Naive thymus-derived CD4-positive, alpha-beta T cell (primary cell): ENCODE measurements at regions of chr16 and their contacts with region 1.

Region 1: DNA sequence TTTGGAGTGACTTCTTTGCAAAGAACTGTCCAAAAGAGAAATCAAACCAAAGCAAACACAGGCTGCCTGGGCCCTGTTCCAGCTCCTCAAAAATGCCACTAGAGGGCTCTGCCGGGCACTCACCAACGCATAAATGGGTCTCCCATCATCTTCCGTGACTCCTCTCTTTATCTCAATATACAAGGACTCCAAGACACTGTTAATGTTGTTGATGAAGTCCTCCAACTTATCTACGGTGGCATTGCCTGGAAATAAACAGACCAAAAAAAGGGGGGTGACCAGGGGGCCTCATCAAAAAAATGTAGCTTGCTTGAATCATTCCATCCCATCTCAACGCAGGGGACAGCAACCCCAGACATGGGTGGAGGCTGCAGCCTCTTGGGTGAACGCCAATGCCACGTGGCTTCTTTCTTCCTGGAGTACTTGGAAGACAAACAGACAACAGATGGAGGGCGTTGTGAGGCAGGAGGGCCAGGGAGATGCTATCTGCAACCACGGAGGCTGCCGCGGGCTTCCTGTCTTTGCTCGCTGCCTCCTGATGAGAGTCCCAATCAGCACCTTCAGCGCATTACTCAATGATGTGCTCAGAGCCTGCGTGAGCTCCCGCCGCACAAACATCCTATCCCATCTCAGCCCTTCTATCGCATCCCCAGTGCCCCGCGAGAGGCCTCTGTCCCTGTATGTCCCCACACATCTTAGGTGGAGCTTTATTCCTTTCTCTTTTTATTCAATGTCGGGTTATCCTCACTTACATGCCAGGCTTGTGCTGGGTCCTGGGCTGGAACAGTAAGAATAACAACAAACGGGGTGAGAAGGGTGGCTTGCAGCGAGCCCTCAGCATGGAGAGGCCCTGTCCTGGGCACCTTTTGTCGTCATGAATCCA is 32.0 kb downstream of the KDM8 start:
- DNase-seq: peak; percentile 61 to 97 (median 96)
- ATAC-seq: peak; percentile 82
- H3K4me3 ChIP-seq: peak overlapping the region; percentile 29
- H3K4me3 Mint-ChIP-seq: peak overlapping the region; percentile 77 to 88 (median 84)
- H3K27ac ChIP-seq: peak overlapping the region; percentile 97
- H3K27ac Mint-ChIP-seq: peak overlapping the region; percentile 91 to 100 (median 99)
- H3K4me1 ChIP-seq: peaks cover 82 to 84% of the 10 kb centered on the region in 2 donors
- H3K4me1 Mint-ChIP-seq: peaks cover 70 to 98% (median 90%) of the 10 kb centered on the region in 7 donors
- H3K27me3 ChIP-seq: no peaks in the 10 kb centered on the region
- H3K27me3 Mint-ChIP-seq: no peaks in the 10 kb centered on the region

Region 2: DNA sequence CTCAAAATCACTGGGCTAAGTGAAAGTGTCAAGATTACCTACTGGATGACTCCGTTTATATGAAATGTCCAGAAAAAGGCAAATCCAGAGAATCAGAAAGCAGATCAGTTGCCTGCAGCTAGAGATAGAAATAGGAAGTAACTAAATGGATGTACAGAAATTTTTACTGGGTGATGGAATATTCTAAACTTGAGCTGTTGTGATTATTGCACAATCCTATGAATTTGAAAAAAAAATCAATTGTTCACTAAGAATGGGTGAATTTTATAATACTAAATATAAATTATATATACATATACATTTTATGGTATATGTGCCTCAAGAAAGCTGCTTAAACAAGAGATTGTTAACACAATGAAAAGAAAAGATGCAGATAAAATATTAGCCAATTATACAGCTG is 349.6 kb before region 1 on chr16:
- CTCF ChIA-PET with region 1: no interaction called
- POLR2A ChIA-PET with region 1: no interaction called
- intact Hi-C with region 1: no loop called
- DNase-seq: no peak
- ATAC-seq: no peak
- H3K4me3 ChIP-seq: no peak overlapping the region
- H3K4me3 Mint-ChIP-seq: no peak overlapping the region
- H3K27ac ChIP-seq: no peak overlapping the region
- H3K27ac Mint-ChIP-seq: no peak overlapping the region
- H3K4me1 ChIP-seq: no peaks in the 10 kb centered on the region
- H3K4me1 Mint-ChIP-seq: no peaks in the 10 kb centered on the region
- H3K27me3 ChIP-seq: no peaks in the 10 kb centered on the region
- H3K27me3 Mint-ChIP-seq: peaks cover 13 to 35% (median 32%) of the 10 kb centered on the region in 5 donors

Region 3: GRCh38 chr16:26961459-26961858 is 273.8 kb before region 1 on chr16:
- CTCF ChIA-PET with region 1: no interaction called
- POLR2A ChIA-PET with region 1: no interaction called
- intact Hi-C with region 1: no loop called
- DNase-seq: no peak
- ATAC-seq: no peak
- H3K4me3 ChIP-seq: no peak overlapping the region
- H3K4me3 Mint-ChIP-seq: no peak overlapping the region
- H3K27ac ChIP-seq: no peak overlapping the region
- H3K27ac Mint-ChIP-seq: peak overlapping the region in 2 of 9 donors; percentile 25 to 69
- H3K4me1 ChIP-seq: no peaks in the 10 kb centered on the region
- H3K4me1 Mint-ChIP-seq: peaks cover 4 to 12% (median 7%) of the 10 kb centered on the region in 7 donors
- H3K27me3 ChIP-seq: no peaks in the 10 kb centered on the region
- H3K27me3 Mint-ChIP-seq: peaks cover 0 to 23% (median 9%) of the 10 kb centered on the region in 5 donors

Region 4: DNA sequence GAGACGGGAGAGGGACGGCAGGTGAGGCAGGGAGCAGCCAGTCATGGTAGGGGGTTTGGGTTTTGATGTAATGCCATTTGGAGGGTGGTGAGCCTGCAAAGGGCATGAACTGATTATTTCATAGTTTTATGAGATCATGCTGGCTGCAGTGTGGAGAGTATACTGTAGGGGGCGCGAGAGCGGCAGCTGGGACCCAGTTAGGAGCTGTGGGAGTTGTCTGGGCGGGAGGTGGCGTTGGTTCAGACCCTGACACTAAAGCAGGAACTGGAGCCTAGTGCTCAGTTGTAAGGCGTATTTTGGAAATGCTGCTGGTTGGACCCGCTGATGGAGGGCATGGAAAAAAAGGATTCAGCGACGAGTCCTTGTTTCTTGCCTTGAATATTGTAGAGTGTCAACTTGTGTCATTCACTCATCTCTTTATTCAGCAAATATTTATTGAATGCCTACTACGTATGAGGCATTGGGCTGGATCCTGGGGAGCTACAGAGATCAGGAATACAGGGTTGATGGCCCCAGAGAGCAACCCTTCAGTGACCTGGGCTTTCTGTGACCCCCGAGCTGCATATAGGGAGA is 55.7 kb before region 1 on chr16:
- CTCF ChIA-PET with region 1: interaction called, 49 read pairs
- POLR2A ChIA-PET with region 1: interaction called, 95 read pairs
- intact Hi-C with region 1: loop called (anchors 1 to 2 kb)
- DNase-seq: peak; percentile 70 to 91 (median 84)
- ATAC-seq: peak; percentile 100
- H3K4me3 ChIP-seq: no peak overlapping the region
- H3K4me3 Mint-ChIP-seq: peak overlapping the region in 9 of 10 donors; percentile 5 to 56 (median 46)
- H3K27ac ChIP-seq: peak overlapping the region; percentile 19
- H3K27ac Mint-ChIP-seq: peak overlapping the region; percentile 51 to 95 (median 86)
- H3K4me1 ChIP-seq: peaks cover 17 to 34% of the 10 kb centered on the region in 2 donors
- H3K4me1 Mint-ChIP-seq: peaks cover 20 to 62% (median 48%) of the 10 kb centered on the region in 7 donors
- H3K27me3 ChIP-seq: no peaks in the 10 kb centered on the region
- H3K27me3 Mint-ChIP-seq: peaks cover 0 to 13% (median 0%) of the 10 kb centered on the region in 5 donors

Region 5: DNA sequence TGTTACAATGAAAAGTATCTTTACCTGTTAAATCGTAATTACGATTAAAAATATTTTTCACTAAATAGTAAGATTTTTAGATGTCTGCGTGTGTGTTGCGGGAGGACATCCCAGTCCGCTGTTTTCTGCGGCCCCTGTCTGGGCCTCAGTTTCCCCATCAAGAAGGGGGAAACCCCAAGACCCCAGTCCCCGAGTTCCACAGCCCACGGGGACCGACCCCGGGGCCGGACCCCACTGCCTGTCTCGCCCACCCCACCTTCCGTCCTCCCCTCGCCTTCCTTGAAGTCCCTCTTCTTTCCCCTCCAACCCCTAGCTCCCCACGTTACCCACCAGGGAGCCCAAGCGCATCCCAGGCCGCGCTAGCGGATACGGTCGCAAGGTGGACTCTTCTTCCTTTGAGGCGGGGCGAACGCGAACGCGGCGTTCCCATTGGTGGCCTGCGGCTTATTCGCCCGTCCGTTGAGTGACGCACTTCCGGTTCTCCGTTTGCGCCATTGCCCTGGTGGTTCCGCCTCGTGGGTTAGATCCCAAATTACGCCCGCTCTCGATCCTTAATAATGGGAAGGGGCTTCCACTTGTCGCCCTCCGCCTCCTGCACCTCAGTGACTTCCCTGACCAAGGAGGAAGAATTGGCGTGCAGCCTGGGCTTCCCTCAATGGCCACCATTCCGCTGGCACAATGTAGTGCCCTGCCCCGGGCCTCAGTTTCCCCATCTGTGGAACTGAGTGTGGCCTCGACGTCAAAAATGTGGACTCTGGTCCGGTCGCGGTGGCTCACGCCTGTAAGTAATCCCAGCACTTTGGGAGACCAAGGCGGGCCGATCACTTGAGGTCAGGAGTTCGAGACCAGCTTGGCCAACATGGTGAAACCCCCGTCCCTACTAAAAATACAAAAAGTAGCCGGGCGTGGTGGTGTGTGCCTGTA is 33.3 kb after region 1 on chr16 and contains the start of gene NSMCE1:
- CTCF ChIA-PET with region 1: interaction called, 12 read pairs
- POLR2A ChIA-PET with region 1: interaction called, 20 read pairs
- intact Hi-C with region 1: loop called (anchors 1 kb)
- DNase-seq: peak; percentile 83 to 93 (median 92)
- ATAC-seq: peak; percentile 99
- H3K4me3 ChIP-seq: peak within 1 kb of the TSS; percentile 92
- H3K4me3 Mint-ChIP-seq: peak within 1 kb of the TSS; percentile 92 to 99 (median 96)
- H3K27ac ChIP-seq: peak within 1 kb of the TSS; percentile 87
- H3K27ac Mint-ChIP-seq: peak within 1 kb of the TSS; percentile 94 to 99 (median 99)
- H3K4me1 ChIP-seq: peaks cover 15 to 36% of the 10 kb centered on the region in 2 donors
- H3K4me1 Mint-ChIP-seq: peaks cover 41 to 95% (median 74%) of the 10 kb centered on the region in 7 donors
- H3K27me3 ChIP-seq: no peaks in the 10 kb centered on the region
- H3K27me3 Mint-ChIP-seq: no peaks in the 10 kb centered on the region
- total RNA-seq, gene NSMCE1: 45.5 to 106 (median 70.2) TPM

Region 6: DNA sequence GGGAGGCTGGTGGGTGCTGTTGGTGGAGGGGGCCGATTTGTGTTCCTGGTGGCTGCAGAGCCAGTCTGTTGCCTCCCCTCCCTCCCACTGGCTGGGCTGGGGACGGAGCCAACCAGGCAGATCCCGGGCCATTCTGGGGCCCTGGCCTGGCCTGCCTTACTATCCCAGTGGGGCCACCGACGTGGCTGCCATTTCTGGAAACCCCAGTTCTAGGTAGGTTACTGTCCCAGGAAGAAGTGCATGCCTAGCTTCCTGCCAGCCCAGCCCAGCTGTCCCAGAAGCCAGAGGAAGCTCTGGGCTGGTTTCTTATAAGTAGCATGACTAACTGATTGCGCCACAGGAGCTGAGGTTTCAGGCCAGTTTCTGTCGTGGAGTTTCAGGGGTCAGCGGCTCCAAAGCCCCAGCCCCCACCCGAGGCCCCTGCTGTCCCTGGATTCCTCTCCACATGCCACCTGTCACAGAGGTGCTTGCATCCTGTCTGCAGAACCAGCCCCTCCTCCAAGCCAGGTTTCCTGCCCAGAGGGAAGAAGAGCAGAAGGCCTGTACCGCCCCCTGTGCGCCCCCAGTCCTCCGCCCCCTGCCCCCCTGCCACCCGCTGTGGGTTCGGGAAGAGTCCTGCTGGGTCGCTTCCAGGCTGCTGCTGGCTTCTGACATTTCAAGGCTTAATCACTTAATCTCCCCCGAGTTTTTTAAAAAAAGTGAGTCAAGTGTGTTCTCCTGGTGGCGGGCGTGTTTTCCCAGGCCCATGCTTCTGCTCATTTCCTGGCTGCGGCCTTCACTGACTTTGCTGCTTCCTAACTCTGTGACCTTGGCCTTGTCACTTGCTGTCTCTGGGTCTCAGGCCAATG is 91.7 kb after region 1 on chr16:
- CTCF ChIA-PET with region 1: interaction called, 107 read pairs
- POLR2A ChIA-PET with region 1: interaction called, 139 read pairs
- intact Hi-C with region 1: loop called in 1 of 2 experiments (anchors 1 kb)
- DNase-seq: peak in 8 of 9 donors; percentile 37 to 53 (median 46)
- ATAC-seq: peak; percentile 73
- H3K4me3 ChIP-seq: peak overlapping the region; percentile 19
- H3K4me3 Mint-ChIP-seq: peak overlapping the region; percentile 44 to 79 (median 68)
- H3K27ac ChIP-seq: peak overlapping the region; percentile 56
- H3K27ac Mint-ChIP-seq: peak overlapping the region; percentile 79 to 94 (median 89)
- H3K4me1 ChIP-seq: peaks cover 24 to 66% of the 10 kb centered on the region in 2 donors
- H3K4me1 Mint-ChIP-seq: peaks cover 53 to 94% (median 87%) of the 10 kb centered on the region in 7 donors
- H3K27me3 ChIP-seq: no peaks in the 10 kb centered on the region
- H3K27me3 Mint-ChIP-seq: no peaks in the 10 kb centered on the region

Region 7: GRCh38 chr16:27401768-27402568 is 166.7 kb after region 1 on chr16 and contains the start of gene IL21R:
- CTCF ChIA-PET with region 1: interaction called, 6 read pairs
- POLR2A ChIA-PET with region 1: interaction called, 7 read pairs
- intact Hi-C with region 1: loop called (anchors 1 to 2 kb)
- DNase-seq: peak; percentile 72 to 91 (median 87)
- ATAC-seq: peak; percentile 91
- H3K4me3 ChIP-seq: peak within 1 kb of the TSS; percentile 88
- H3K4me3 Mint-ChIP-seq: peak within 1 kb of the TSS; percentile 76 to 99 (median 98)
- H3K27ac ChIP-seq: peak within 1 kb of the TSS; percentile 91
- H3K27ac Mint-ChIP-seq: peak within 1 kb of the TSS; percentile 89 to 99 (median 98)
- H3K4me1 ChIP-seq: peaks cover 38 to 44% of the 10 kb centered on the region in 2 donors
- H3K4me1 Mint-ChIP-seq: peaks cover 23 to 75% (median 70%) of the 10 kb centered on the region in 7 donors
- H3K27me3 ChIP-seq: no peaks in the 10 kb centered on the region
- H3K27me3 Mint-ChIP-seq: no peaks in the 10 kb centered on the region
- total RNA-seq, gene IL21R: 24.6 to 40.9 (median 31.4) TPM

Region 8: GRCh38 chr16:27549859-27550581 is 314.7 kb after region 1 on chr16 and contains the starts of genes GTF3C1 and KATNIP:
- CTCF ChIA-PET with region 1: no interaction called
- POLR2A ChIA-PET with region 1: no interaction called
- intact Hi-C with region 1: loop called in 1 of 2 experiments (anchors 1 kb)
- DNase-seq: peak; percentile 100
- ATAC-seq: peak; percentile 100
- H3K4me3 ChIP-seq: peak within 1 kb of the TSS; percentile 100
- H3K4me3 Mint-ChIP-seq: peak within 1 kb of the TSS; percentile 95 to 98 (median 97)
- H3K27ac ChIP-seq: peak within 1 kb of the TSS; percentile 85
- H3K27ac Mint-ChIP-seq: peak within 1 kb of the TSS; percentile 94 to 99 (median 98)
- H3K4me1 ChIP-seq: peaks cover 21 to 22% of the 10 kb centered on the region in 2 donors
- H3K4me1 Mint-ChIP-seq: peaks cover 26 to 51% (median 44%) of the 10 kb centered on the region in 7 donors
- H3K27me3 ChIP-seq: no peaks in the 10 kb centered on the region
- H3K27me3 Mint-ChIP-seq: peaks cover 0 to 2% (median 0%) of the 10 kb centered on the region in 5 donors
- total RNA-seq, gene GTF3C1: 51.8 to 60.0 (median 52.6) TPM
- total RNA-seq, gene KATNIP: 18.7 to 39.0 (median 21.3) TPM